ENCODE measurements at regions of chr3 and their contacts with region 1.

Region 1: GRCh38 chr3:11271986-11272904 is at the start of gene ATG7:
- H3K4me3 Mint-ChIP-seq: peak within 1 kb of the TSS; percentile 79
- H3K27ac Mint-ChIP-seq: peak within 1 kb of the TSS; percentile 96
- H3K4me1 Mint-ChIP-seq: peaks cover 55% of the 10 kb centered on the region
- H3K27me3 Mint-ChIP-seq: no peaks in the 10 kb centered on the region

Region 2: GRCh38 chr3:10522646-10523303 is 749.5 kb before region 1 on chr3:
- intact Hi-C with region 1: no loop called
- H3K4me3 Mint-ChIP-seq: no peak overlapping the region
- H3K27ac Mint-ChIP-seq: no peak overlapping the region
- H3K4me1 Mint-ChIP-seq: no peaks in the 10 kb centered on the region
- H3K27me3 Mint-ChIP-seq: peaks cover 24% of the 10 kb centered on the region

Region 3: GRCh38 chr3:11250902-11251813 is 21.1 kb before region 1 on chr3:
- intact Hi-C with region 1: no loop called
- H3K4me3 Mint-ChIP-seq: no peak overlapping the region
- H3K27ac Mint-ChIP-seq: no peak overlapping the region
- H3K4me1 Mint-ChIP-seq: peaks cover 47% of the 10 kb centered on the region
- H3K27me3 Mint-ChIP-seq: peaks cover 3% of the 10 kb centered on the region

Region 4: DNA sequence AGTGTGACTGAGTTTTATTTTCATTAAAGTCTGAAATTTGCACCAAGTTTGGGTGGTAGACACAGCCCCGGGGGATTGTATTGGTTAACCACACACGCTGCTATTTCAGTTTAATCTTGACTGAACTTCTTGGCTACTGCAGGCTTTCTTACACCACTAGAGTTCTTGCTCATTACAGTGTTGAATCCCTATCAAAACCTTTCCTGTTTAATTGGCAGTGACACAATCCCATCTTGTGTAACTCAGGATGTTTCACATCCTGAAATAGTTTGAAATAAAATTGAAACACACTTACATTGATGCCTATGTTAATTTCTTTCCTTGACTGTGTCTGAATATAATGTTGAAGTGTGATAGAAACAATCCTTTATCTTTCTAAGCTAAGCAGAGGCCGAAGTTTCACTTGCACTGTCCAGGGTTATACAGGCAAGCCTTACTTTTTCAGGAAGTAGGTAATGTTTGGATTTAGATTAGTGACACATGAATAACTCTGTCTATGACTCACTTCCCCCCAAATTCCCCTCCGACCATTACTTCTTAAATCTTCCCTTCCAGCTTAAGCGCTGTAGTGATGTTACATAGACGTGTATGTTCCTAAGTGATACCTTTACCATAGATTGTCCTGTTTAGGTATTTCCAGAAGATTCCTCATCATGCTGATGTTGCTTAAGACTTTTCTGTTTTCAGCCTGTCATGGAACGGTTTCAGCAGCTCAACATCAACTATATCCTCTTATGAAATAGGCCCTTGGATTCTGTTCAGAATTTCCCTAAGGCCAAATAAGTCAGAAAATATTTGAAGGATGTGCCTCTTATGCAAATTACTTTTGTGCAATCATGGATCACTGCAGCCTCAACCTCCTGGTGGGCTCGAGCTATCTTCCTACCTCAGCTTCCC is 16.8 kb after region 1 on chr3:
- intact Hi-C with region 1: loop called (anchors 1 kb)
- H3K4me3 Mint-ChIP-seq: peak overlapping the region; percentile 26
- H3K27ac Mint-ChIP-seq: peak overlapping the region; percentile 86
- H3K4me1 Mint-ChIP-seq: peaks cover 80% of the 10 kb centered on the region
- H3K27me3 Mint-ChIP-seq: no peaks in the 10 kb centered on the region

Region 5: DNA sequence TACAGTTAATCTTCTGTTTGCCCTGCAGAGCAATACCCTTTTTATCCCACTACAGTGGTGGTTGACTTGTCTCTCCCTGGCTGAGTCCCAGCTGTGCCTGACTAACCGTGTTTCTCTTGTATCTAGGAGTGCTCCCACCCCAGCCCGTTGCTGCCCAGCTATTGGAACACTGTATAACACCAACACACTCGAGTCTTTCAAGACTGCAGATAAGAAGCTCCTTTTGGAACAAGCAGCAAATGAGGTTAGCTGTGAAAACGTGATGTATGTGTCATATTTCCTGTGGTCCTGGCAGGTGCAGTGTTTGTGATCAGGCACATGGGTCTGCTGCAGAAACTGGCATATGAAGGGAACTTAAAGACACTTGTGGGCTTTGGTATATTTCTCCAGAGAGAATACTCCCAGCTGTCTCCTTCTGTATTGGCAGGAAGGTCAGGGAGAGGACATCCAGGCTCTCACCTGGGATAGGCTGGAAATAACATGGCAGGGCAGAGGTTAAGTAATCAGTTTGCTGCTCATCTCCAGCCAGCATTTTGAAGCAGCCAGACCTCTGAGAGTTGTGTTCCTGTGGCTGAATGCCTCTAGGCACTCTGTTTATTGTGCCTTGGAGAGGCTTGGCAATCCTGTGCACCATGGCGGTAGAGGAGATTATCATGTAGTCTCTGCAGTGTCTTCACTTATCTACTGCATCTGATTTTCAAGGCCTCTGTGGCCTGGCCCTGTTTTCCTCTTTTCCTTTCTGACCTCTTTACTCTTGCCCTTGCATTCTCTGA is 34.8 kb after region 1 on chr3:
- intact Hi-C with region 1: loop called (anchors 5 kb)
- H3K4me3 Mint-ChIP-seq: no peak overlapping the region
- H3K27ac Mint-ChIP-seq: peak overlapping the region; percentile 95
- H3K4me1 Mint-ChIP-seq: peaks cover 54% of the 10 kb centered on the region
- H3K27me3 Mint-ChIP-seq: no peaks in the 10 kb centered on the region

Region 6: DNA sequence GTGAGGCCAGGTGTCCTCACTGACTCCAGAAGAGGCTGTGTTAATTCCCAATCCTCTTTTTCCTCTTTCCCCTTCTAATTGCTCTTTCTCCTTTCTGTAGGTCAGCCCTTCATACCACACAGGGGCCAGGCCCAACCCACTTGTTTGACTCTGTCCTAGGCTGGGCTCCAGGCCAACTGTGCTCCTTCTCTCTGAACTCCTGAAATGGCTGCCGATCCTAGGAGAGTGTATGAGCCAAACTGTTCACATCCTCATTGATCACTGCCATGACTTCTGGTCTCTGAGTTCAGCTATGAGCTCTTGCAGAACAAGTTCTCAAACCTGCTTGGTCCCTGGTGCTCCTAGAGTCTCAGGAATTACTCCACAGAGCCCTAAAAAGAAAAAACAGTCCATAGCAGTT is 226.4 kb after region 1 on chr3:
- intact Hi-C with region 1: no loop called
- H3K4me3 Mint-ChIP-seq: no peak overlapping the region
- H3K27ac Mint-ChIP-seq: no peak overlapping the region
- H3K4me1 Mint-ChIP-seq: peaks cover 14% of the 10 kb centered on the region
- H3K27me3 Mint-ChIP-seq: no peaks in the 10 kb centered on the region